Naive thymus-derived CD4-positive, alpha-beta T cell (primary cell): ENCODE measurements at regions of chr3 and their contacts with region 1.

Region 1: DNA sequence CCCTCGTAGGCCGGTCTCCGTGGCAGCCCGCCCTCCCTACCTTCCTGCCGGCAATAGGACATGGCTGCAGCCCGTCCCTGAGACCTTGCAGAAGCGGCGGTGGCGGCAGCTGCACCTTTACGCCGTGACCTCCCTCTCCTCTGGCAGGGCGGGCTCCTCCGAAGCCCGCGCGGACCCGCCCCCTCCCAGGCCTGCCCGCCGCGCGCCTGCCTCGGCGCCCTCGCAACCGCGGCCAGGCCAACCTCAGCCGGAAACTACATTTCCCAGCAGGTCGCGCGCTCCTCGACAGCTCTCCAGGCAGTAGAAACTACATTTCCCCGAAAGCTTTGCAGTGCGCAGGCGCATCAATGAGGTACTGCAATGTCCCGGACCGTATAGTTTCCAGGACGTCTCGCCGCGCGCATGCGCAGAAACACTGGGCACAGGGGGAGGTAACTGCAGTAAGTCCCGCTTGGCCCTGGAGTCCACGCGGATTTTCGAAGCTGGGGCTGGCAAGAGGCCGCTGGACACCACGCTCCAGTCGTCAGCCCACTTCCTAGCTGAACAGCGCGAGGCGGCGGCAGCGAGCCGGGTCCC is at the starts of genes CHCHD4 and TMEM43:
- DNase-seq: peak; percentile 91 to 99 (median 98)
- ATAC-seq: peak; percentile 96
- H3K4me3 ChIP-seq: peak within 1 kb of the TSS; percentile 100
- H3K4me3 Mint-ChIP-seq: peak within 1 kb of the TSS; percentile 93 to 98 (median 96)
- H3K27ac ChIP-seq: peak within 1 kb of the TSS; percentile 89
- H3K27ac Mint-ChIP-seq: peak within 1 kb of the TSS; percentile 87 to 97 (median 94)
- H3K4me1 ChIP-seq: peaks cover 28 to 30% of the 10 kb centered on the region in 2 donors
- H3K4me1 Mint-ChIP-seq: peaks cover 43 to 70% (median 63%) of the 10 kb centered on the region in 7 donors
- H3K27me3 ChIP-seq: no peaks in the 10 kb centered on the region
- H3K27me3 Mint-ChIP-seq: no peaks in the 10 kb centered on the region
- total RNA-seq, gene CHCHD4: 3.3 to 14.1 (median 8.4) TPM
- total RNA-seq, gene TMEM43: 30.1 to 54.8 (median 46.5) TPM

Region 2: GRCh38 chr3:13419505-13420044 is 705.1 kb before region 1 on chr3:
- CTCF ChIA-PET with region 1: no interaction called
- POLR2A ChIA-PET with region 1: no interaction called
- intact Hi-C with region 1: loop called in 1 of 2 experiments (anchors 2 kb)
- DNase-seq: peak; percentile 58 to 69 (median 64)
- ATAC-seq: peak; percentile 74
- H3K4me3 ChIP-seq: peak overlapping the region; percentile 70
- H3K4me3 Mint-ChIP-seq: peak overlapping the region; percentile 77 to 100 (median 90)
- H3K27ac ChIP-seq: peak overlapping the region; percentile 96
- H3K27ac Mint-ChIP-seq: peak overlapping the region; percentile 83 to 97 (median 92)
- H3K4me1 ChIP-seq: peaks cover 55 to 60% of the 10 kb centered on the region in 2 donors
- H3K4me1 Mint-ChIP-seq: peaks cover 41 to 81% (median 69%) of the 10 kb centered on the region in 7 donors
- H3K27me3 ChIP-seq: no peaks in the 10 kb centered on the region
- H3K27me3 Mint-ChIP-seq: no peaks in the 10 kb centered on the region

Region 3: GRCh38 chr3:13648060-13649001 is 476.4 kb before region 1 on chr3:
- CTCF ChIA-PET with region 1: no interaction called
- POLR2A ChIA-PET with region 1: no interaction called
- intact Hi-C with region 1: loop called in 1 of 2 experiments (anchors 10 kb)
- DNase-seq: peak; percentile 50 to 82 (median 72)
- ATAC-seq: peak; percentile 62
- H3K4me3 ChIP-seq: no peak overlapping the region
- H3K4me3 Mint-ChIP-seq: peak overlapping the region in 7 of 10 donors; percentile 17 to 64 (median 41)
- H3K27ac ChIP-seq: no peak overlapping the region
- H3K27ac Mint-ChIP-seq: peak overlapping the region in 2 of 9 donors; percentile 57 to 87
- H3K4me1 ChIP-seq: peaks cover 9 to 12% of the 10 kb centered on the region in 2 donors
- H3K4me1 Mint-ChIP-seq: peaks cover 14 to 40% (median 23%) of the 10 kb centered on the region in 7 donors
- H3K27me3 ChIP-seq: no peaks in the 10 kb centered on the region
- H3K27me3 Mint-ChIP-seq: peaks cover 15 to 48% (median 20%) of the 10 kb centered on the region in 5 donors

Region 4: GRCh38 chr3:13927295-13927694 is 197.4 kb before region 1 on chr3:
- CTCF ChIA-PET with region 1: no interaction called
- POLR2A ChIA-PET with region 1: no interaction called
- intact Hi-C with region 1: no loop called
- DNase-seq: no peak
- ATAC-seq: no peak
- H3K4me3 ChIP-seq: no peak overlapping the region
- H3K4me3 Mint-ChIP-seq: no peak overlapping the region
- H3K27ac ChIP-seq: no peak overlapping the region
- H3K27ac Mint-ChIP-seq: peak overlapping the region in 1 of 9 donors; percentile 42
- H3K4me1 ChIP-seq: no peaks in the 10 kb centered on the region
- H3K4me1 Mint-ChIP-seq: peaks cover 0 to 5% (median 0%) of the 10 kb centered on the region in 7 donors
- H3K27me3 ChIP-seq: peaks cover 0 to under 1% of the 10 kb centered on the region in 2 donors
- H3K27me3 Mint-ChIP-seq: peaks cover 0 to 22% (median 18%) of the 10 kb centered on the region in 5 donors

Region 5: DNA sequence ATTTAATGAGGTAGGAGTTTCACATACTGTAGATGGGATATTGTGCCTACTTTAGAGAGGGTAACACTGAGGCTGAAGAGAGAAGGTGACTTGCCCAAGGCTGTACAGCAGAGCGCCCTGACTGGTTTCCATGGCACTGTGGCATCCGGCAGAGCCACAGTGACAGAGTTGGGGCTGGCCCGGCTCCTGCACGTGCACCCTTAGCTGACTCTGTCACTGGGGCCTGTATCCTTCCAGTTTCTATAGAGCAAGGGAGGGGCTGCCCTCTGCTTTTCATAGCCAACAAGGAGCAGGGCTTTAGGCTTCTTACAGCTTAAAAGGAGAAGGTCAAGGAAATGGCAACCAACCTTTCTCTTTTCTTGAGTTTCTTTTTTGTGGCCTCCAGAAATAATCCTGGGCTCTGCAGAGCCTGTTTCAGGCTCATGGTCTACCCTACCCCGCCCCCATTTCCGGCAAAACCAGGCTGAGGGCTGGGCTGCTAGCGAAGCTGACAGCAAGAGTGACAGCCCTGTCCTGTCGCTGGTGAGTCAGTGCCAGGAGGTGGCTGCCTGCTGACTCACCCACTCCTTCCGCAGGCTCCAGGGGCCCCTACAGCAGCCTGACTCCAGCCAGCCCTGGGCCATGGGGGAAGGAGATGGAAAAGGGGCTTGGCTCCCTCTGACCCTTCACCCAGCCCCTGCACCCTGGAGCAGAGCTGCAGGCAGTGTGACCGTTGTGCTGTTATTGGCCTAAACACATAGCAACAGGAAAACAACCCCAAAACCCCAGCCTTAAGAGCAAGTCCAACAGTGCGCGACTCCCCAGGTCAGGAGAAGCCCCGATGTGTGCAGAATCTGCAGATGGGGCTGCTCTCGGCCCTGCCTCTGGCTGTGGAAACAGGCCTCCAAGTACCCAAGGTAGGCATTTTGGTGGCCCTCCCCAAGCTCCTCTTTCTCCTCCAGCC is 307.5 kb after region 1 on chr3:
- CTCF ChIA-PET with region 1: no interaction called
- POLR2A ChIA-PET with region 1: no interaction called
- intact Hi-C with region 1: loop called (anchors 1 to 2 kb)
- DNase-seq: peak; percentile 73 to 94 (median 91)
- ATAC-seq: peak; percentile 89
- H3K4me3 ChIP-seq: peak overlapping the region; percentile 53
- H3K4me3 Mint-ChIP-seq: peak overlapping the region; percentile 51 to 90 (median 78)
- H3K27ac ChIP-seq: peak overlapping the region; percentile 84
- H3K27ac Mint-ChIP-seq: peak overlapping the region; percentile 87 to 100 (median 98)
- H3K4me1 ChIP-seq: peaks cover 55 to 81% of the 10 kb centered on the region in 2 donors
- H3K4me1 Mint-ChIP-seq: peaks cover 57 to 85% (median 75%) of the 10 kb centered on the region in 7 donors
- H3K27me3 ChIP-seq: no peaks in the 10 kb centered on the region
- H3K27me3 Mint-ChIP-seq: no peaks in the 10 kb centered on the region

Region 6: GRCh38 chr3:14537590-14538447 is 413.1 kb after region 1 on chr3:
- CTCF ChIA-PET with region 1: no interaction called
- POLR2A ChIA-PET with region 1: no interaction called
- intact Hi-C with region 1: no loop called
- DNase-seq: no peak
- ATAC-seq: no peak
- H3K4me3 ChIP-seq: no peak overlapping the region
- H3K4me3 Mint-ChIP-seq: no peak overlapping the region
- H3K27ac ChIP-seq: no peak overlapping the region
- H3K27ac Mint-ChIP-seq: no peak overlapping the region
- H3K4me1 ChIP-seq: no peaks in the 10 kb centered on the region
- H3K4me1 Mint-ChIP-seq: peaks cover 0 to 1% (median 0%) of the 10 kb centered on the region in 7 donors
- H3K27me3 ChIP-seq: no peaks in the 10 kb centered on the region
- H3K27me3 Mint-ChIP-seq: peaks cover 0 to 13% (median 4%) of the 10 kb centered on the region in 5 donors

Region 7: GRCh38 chr3:15064835-15065549 is 940.3 kb after region 1 on chr3 and contains the start of gene MRPS25:
- CTCF ChIA-PET with region 1: no interaction called
- POLR2A ChIA-PET with region 1: no interaction called
- intact Hi-C with region 1: loop called in 1 of 2 experiments (anchors 1 kb)
- DNase-seq: peak; percentile 80 to 90 (median 87)
- ATAC-seq: peak; percentile 99
- H3K4me3 ChIP-seq: peak within 1 kb of the TSS; percentile 86
- H3K4me3 Mint-ChIP-seq: peak within 1 kb of the TSS; percentile 94 to 98 (median 96)
- H3K27ac ChIP-seq: peak within 1 kb of the TSS; percentile 87
- H3K27ac Mint-ChIP-seq: peak within 1 kb of the TSS; percentile 87 to 99 (median 94)
- H3K4me1 ChIP-seq: peaks cover 7 to 14% of the 10 kb centered on the region in 2 donors
- H3K4me1 Mint-ChIP-seq: peaks cover 16 to 29% (median 22%) of the 10 kb centered on the region in 7 donors
- H3K27me3 ChIP-seq: no peaks in the 10 kb centered on the region
- H3K27me3 Mint-ChIP-seq: no peaks in the 10 kb centered on the region
- total RNA-seq, gene MRPS25: 57.6 to 104 (median 76.0) TPM